ENCODE measurements at regions of chr2 and their contacts with region 1.

Region 1: DNA sequence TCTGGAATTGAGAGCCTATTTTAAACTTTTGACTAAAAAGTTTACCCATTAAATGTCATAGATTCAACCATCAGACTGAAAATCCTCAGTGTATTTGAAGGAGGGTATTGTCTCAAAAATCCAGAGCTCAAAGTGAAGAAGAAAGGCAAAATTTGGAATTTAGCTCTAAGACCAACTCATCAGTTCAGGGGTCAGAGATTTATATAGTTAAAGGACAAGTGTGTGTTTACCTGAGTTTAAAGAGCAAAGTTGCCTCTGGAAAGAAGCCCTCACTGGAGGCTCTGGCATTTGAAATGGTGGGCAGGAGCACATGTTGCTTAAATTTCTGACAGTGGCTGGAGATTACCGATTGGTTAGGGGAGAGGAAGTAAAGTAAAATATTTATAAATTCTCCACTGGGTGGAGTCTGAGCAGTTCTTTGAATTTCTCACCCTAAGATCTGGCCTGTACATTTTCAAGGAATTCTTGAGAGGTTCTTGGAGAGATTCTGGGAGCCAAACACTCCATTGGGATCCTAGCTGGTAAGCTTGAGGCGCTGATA is at the start of gene KYNU:
- DNase-seq: peak in 2 of 4 experiments; percentile 7 to 53
- ATAC-seq: peak; percentile 79
- H3K4me3 ChIP-seq: no peak within 1 kb of the TSS
- H3K27ac ChIP-seq: peak within 1 kb of the TSS; percentile 10; the same call in 1 of the 3 replicates
- H3K4me1 ChIP-seq: no peaks in the 10 kb centered on the region
- H3K27me3 ChIP-seq: no peaks in the 10 kb centered on the region
- CTCF ChIP-seq: 0 out of 6 replicates have a peak, but pooled peaks of 1 of the 3 experiments have one; percentile 5
- EP300 ChIP-seq: no peak
- POLR2A ChIP-seq: no peak
- RAD21 ChIP-seq: peak in 1 of 2 experiments; percentile 38; a peak in 2 of 4 replicates
- polyA plus RNA-seq, gene KYNU: 10.3 to 10.7 TPM

Region 2: GRCh38 chr2:142980561-142981378 is 103.5 kb after region 1 on chr2:
- CTCF ChIA-PET with region 1: no interaction called
- POLR2A ChIA-PET with region 1: no interaction called
- in situ Hi-C with region 1: no loop called
- intact Hi-C with region 1: loop called (anchors 5 kb)
- DNase-seq: peak in 1 of 4 experiments; percentile 17
- ATAC-seq: no peak
- H3K4me3 ChIP-seq: no peak overlapping the region
- H3K27ac ChIP-seq: no peak overlapping the region
- H3K4me1 ChIP-seq: no peaks in the 10 kb centered on the region
- H3K27me3 ChIP-seq: no peaks in the 10 kb centered on the region
- CTCF ChIP-seq: peak in 1 of 3 experiments; percentile 51; a peak in 3 of 6 replicates
- EP300 ChIP-seq: no peak
- POLR2A ChIP-seq: no peak
- RAD21 ChIP-seq: peak; percentile 57 to 78

Region 3: DNA sequence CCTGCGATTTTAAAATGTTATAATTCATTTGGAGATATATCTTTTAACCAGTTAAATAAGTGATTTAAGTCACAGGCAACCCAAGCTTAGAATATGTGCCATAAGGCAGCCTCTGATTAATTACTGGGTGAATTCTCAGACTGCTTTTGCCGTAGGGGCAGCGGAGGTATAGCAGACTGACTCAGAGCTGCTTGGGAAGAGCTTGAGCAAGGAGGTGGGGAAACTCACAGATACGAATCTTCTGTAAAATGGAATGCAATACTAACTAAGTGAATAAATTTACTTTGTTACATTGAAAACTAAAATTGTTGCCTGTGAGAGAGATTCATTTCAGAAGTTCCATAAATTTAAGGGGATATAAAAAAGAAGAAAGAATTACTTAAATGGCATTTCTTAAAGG is 115.6 kb after region 1 on chr2:
- CTCF ChIA-PET with region 1: no interaction called
- POLR2A ChIA-PET with region 1: no interaction called
- in situ Hi-C with region 1: no loop called
- intact Hi-C with region 1: no loop called
- DNase-seq: no peak
- ATAC-seq: no peak
- H3K4me3 ChIP-seq: no peak overlapping the region
- H3K27ac ChIP-seq: no peak overlapping the region
- H3K4me1 ChIP-seq: no peaks in the 10 kb centered on the region
- H3K27me3 ChIP-seq: no peaks in the 10 kb centered on the region
- CTCF ChIP-seq: no peak
- EP300 ChIP-seq: no peak
- POLR2A ChIP-seq: no peak
- RAD21 ChIP-seq: no peak

Region 4: DNA sequence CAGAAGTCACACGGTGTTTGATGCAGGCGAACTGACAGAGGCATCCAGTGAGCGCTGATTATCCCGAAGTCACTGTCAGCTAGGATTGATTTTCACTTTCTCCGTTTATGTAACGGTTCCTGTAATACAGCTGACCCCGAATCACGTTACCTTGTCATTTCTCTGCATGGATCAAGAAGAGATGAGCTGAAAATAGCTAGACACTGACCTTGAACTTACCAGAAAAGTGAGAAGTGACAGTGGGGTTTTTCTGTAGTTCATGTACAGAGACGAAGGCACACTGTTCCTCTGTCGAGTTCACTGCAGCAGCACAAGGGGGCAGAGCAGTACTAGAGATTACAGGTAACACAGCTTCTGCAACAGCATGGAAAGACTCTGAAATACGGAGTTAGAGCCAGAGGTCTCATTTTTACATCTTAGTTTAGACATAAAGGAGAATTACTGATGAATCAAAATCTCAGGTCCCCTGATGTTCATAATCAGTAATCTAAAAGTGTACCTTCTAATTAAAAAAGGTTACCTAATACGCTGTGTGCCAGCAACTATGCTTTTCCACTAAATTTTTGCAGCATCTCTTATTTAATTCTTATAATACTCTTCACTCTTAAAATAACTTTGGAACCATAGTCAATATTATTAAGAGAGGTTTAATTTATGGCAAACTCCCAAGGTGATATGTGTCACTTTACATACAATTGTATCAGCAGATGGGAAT is 285.0 kb after region 1 on chr2:
- CTCF ChIA-PET with region 1: no interaction called
- POLR2A ChIA-PET with region 1: no interaction called
- in situ Hi-C with region 1: no loop called
- intact Hi-C with region 1: no loop called
- DNase-seq: peak in 2 of 4 experiments; percentile 13 to 61
- ATAC-seq: peak; percentile 93
- H3K4me3 ChIP-seq: no peak overlapping the region
- H3K27ac ChIP-seq: no peak overlapping the region
- H3K4me1 ChIP-seq: no peaks in the 10 kb centered on the region
- H3K27me3 ChIP-seq: no peaks in the 10 kb centered on the region
- CTCF ChIP-seq: peak; percentile 38 to 49 (median 48); a peak in 5 of 6 replicates
- EP300 ChIP-seq: no peak
- POLR2A ChIP-seq: no peak
- RAD21 ChIP-seq: peak; percentile 52 to 67